Activated naive CD4-positive, alpha-beta T cell treated with anti-CD3 and anti-CD28 coated beads for 36 hours (primary cell): ENCODE measurements at regions of chr1 and their contacts with region 1.

Region 1: GRCh38 chr1:83490988-83491387 is 507.9 kb downstream of the TTLL7 start:
- DNase-seq: no peak
- H3K4me3 Mint-ChIP-seq: no peak overlapping the region
- H3K27ac Mint-ChIP-seq: peak overlapping the region; percentile 46
- H3K4me1 Mint-ChIP-seq: peaks cover 52% of the 10 kb centered on the region
- H3K27me3 Mint-ChIP-seq: no peaks in the 10 kb centered on the region

Region 2: DNA sequence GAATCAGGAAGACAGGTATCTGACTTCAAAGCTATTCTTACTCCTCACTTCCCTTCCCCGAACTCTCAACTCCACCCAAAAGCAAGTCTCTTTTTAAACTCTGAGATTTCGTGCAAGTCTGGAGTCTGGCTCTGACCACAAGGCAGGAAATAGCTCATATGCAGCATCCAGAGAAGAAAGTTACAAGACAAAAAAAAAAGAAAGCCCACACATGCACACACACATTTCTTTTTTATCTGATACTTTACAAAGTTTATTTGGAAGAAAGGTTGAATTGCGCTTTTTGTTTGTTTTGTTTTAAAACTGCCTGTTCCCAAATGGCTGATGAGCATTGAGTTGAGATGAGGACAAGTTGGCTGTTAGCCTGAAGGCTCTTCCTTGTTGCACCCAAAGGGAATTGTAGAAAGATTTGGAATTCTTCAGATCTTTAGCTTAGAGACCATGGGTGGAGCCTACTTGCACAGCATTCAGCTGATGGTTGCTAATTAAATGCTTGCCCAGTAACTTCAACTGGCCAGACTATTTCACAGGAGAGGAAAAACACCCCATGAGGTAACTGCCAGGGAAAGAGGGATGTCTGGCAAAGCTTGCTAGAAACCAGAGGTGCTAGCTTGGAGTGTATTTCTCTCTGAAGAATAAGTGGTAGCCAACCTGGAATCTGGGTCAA is 17.6 kb after region 1 on chr1:
- CTCF ChIA-PET with region 1: no interaction called
- intact Hi-C with region 1: loop called (anchors 1 kb)
- DNase-seq: peak; percentile 68
- H3K4me3 Mint-ChIP-seq: peak overlapping the region; percentile 46
- H3K27ac Mint-ChIP-seq: peak overlapping the region; percentile 91
- H3K4me1 Mint-ChIP-seq: peaks cover 46% of the 10 kb centered on the region
- H3K27me3 Mint-ChIP-seq: no peaks in the 10 kb centered on the region